PC-9 (cell line): ENCODE measurements at regions of chr21 and their contacts with region 1.

Region 1: GRCh38 chr21:33901412-33902288 is 14.0 kb downstream of the ATP5PO start:
- DNase-seq: peak in 1 of 2 experiments; percentile 21
- H3K4me3 ChIP-seq: no peak overlapping the region
- H3K27ac ChIP-seq: no peak overlapping the region
- H3K4me1 ChIP-seq: no peaks in the 10 kb centered on the region
- H3K27me3 ChIP-seq: no peaks in the 10 kb centered on the region
- CTCF ChIP-seq: peak; percentile 51

Region 2: GRCh38 chr21:33947451-33948095 is 45.9 kb after region 1 on chr21:
- CTCF ChIA-PET with region 1: interaction called, 15 read pairs
- POLR2A ChIA-PET with region 1: no interaction called
- intact Hi-C with region 1: no loop called
- DNase-seq: peak; percentile 83 to 97
- H3K4me3 ChIP-seq: peak overlapping the region; percentile 40; the same call in 1 of the 2 replicates
- H3K27ac ChIP-seq: peak overlapping the region; percentile 69
- H3K4me1 ChIP-seq: peaks cover 17% of the 10 kb centered on the region
- H3K27me3 ChIP-seq: no peaks in the 10 kb centered on the region
- CTCF ChIP-seq: no peak

Region 3: DNA sequence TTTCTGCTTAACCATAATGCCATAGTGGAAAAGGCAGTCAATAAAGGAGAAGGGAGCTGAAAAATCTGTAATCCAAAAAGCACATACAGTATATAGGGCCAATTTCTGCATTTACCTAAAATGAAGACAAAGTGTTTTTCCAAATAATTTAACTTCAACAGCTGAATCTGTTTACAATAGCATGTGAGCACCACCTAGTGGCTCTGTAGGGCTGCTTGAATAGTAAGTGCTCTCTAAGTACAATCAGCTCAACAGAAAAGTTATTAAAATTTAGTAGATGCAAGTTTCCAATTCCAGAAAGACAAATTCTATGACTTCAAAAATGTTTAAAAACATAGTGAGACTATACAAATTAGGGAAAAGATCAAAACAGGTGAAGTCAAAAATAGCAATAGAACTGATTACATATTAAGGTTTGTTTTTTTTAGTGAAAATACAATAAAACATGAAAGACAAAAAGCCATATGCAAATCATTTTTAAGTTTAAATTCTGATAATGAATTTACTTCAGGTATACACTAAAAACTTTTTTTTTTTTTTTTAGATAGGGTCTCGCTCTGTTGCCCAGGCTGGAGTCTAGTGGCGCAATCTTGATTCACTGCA is 1938.6 kb after region 1 on chr21:
- CTCF ChIA-PET with region 1: no interaction called
- POLR2A ChIA-PET with region 1: no interaction called
- intact Hi-C with region 1: no loop called
- DNase-seq: peak; percentile 32 to 39
- H3K4me3 ChIP-seq: no peak overlapping the region
- H3K27ac ChIP-seq: no peak overlapping the region
- H3K4me1 ChIP-seq: no peaks in the 10 kb centered on the region
- H3K27me3 ChIP-seq: no peaks in the 10 kb centered on the region
- CTCF ChIP-seq: peak; percentile 83